Activated CD4-positive, alpha-beta T cell treated with anti-CD3 and anti-CD28 coated beads, Interleukin-2, amount 10 ng/mL, durations not matched to agents 24 days and 14 days (primary cell): ENCODE measurements at regions of chr6 and their contacts with region 1.

Region 1: GRCh38 chr6:142871910-142872331 is 73.1 kb downstream of the HIVEP2 start:
- DNase-seq: peak; percentile 87
- H3K4me3 Mint-ChIP-seq: peak overlapping the region; percentile 78
- H3K27ac Mint-ChIP-seq: peak overlapping the region; percentile 66
- H3K4me1 Mint-ChIP-seq: peaks cover 77% of the 10 kb centered on the region
- H3K27me3 Mint-ChIP-seq: no peaks in the 10 kb centered on the region

Region 2: DNA sequence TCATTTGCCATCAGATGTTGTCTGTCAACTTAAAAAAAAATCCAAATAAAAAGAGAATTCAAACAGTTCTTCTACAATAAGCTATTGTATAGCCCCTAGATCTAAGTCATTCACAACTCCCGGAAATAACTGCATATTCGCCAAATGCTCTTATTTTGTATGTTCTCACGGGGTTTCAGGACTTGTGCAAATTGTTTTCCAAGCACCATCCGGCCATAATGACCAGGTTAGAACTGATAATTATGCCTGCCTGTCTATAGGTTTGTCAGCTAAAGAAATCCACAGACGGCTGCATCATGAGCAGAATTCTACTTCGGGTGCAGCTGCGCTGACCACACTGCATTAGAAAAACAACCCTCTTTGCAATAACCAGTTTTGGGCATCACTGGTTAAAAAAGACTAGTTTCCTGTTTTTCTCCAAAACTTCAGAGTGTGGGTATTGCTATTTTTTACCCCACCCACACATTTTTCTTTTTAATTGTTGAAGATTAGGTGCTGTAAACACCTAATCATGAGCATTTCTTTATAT is 14.6 kb before region 1 on chr6:
- intact Hi-C with region 1: loop called (anchors 1 kb)
- DNase-seq: peak; percentile 78
- H3K4me3 Mint-ChIP-seq: peak overlapping the region; percentile 83
- H3K27ac Mint-ChIP-seq: peak overlapping the region; percentile 97
- H3K4me1 Mint-ChIP-seq: peaks cover 81% of the 10 kb centered on the region
- H3K27me3 Mint-ChIP-seq: no peaks in the 10 kb centered on the region

Region 3: DNA sequence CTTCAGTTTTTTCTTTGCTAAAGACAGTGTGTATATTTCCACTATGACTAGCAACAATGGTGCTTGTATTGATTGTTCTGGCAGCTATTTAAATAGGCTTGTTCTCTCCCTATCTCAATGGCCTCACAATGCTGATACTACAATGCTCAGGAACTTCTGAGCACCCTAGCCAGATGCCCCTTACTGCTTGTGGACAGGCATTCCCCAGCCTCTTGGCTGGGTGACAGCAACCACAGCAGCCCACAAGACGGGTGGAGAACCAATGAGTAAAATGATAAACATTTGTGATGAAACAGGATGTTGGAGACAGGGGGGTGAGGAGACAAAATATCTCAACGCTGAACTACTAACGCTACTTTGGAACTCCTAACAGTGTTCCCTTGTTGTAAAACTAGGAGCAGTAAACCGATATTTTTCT is 30.7 kb after region 1 on chr6:
- intact Hi-C with region 1: loop called (anchors 1 kb)
- DNase-seq: peak; percentile 93
- H3K4me3 Mint-ChIP-seq: peak overlapping the region; percentile 78
- H3K27ac Mint-ChIP-seq: peak overlapping the region; percentile 98
- H3K4me1 Mint-ChIP-seq: peaks cover 63% of the 10 kb centered on the region
- H3K27me3 Mint-ChIP-seq: no peaks in the 10 kb centered on the region

Region 4: DNA sequence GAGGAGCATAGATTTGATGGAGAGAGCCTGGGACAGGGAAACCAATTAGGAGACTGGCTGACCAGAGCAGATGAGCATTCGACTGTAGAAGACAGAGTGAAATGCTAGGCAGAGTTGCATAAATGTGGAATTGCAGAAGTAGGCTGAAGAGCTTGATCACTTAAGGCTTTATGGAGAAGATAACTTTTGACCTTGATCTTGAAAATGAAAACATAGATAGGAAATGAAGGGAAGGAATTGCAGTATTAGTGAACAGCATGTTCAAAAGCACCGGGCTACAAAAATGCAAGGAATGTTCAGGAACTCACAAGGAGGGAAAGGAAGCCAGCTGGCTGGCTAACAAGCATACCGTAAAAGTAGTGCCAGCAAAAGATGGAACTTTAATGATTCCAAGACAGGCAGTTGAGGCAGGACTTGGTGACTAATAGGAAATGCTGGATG is 950.7 kb after region 1 on chr6:
- intact Hi-C with region 1: loop called (anchors 10 kb)
- DNase-seq: no peak
- H3K4me3 Mint-ChIP-seq: no peak overlapping the region
- H3K27ac Mint-ChIP-seq: no peak overlapping the region
- H3K4me1 Mint-ChIP-seq: peaks cover 3% of the 10 kb centered on the region
- H3K27me3 Mint-ChIP-seq: no peaks in the 10 kb centered on the region